ENCODE measurements at regions of chr7 and their contacts with region 1.

Region 1: DNA sequence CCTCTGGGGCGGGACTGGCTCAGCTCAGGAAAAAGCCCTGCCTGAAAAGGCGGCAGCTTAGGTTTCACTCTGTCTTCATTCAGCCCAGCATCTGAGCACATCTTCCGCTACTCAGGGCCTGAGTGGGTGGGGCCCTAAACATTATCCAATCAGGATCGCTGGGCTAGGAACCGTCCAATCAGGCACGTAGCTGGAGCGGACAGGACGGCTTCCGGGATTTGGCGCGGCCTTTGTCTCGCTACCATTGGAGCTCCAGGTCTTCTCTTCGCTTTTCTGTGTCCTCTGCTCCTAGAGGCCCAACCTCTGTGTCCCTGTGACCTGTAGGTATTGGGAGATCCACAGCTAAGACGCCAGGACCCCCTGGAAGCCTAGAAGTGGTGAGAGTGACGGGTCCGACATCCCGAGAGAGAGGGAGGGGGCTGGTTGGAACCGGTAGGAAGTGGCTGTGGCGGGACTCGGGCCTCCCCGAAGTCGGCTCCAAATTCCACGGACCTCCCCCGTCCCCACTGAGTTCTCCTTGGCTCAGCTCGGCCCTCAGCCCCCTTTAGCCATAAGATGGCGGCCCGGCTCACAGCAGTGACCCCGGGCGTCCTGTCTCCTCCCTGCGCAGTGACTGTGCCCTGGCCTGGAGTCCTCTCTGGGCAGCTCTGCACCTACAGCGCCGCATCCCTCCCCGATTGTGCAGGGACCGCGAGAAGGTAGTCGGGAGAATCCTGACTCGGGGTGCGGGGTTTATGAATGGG is 99.1 kb downstream of the ZNF680 start:
- DNase-seq: peak; percentile 4
- ATAC-seq: peak; percentile 42
- H3K4me3 ChIP-seq: peak overlapping the region; percentile 36
- H3K27ac ChIP-seq: no peak overlapping the region
- H3K4me1 ChIP-seq: no peaks in the 10 kb centered on the region
- H3K27me3 ChIP-seq: no peaks in the 10 kb centered on the region
- CTCF ChIP-seq: no peak
- POLR2A ChIP-seq: no peak
- RAD21 ChIP-seq: no peak

Region 2: DNA sequence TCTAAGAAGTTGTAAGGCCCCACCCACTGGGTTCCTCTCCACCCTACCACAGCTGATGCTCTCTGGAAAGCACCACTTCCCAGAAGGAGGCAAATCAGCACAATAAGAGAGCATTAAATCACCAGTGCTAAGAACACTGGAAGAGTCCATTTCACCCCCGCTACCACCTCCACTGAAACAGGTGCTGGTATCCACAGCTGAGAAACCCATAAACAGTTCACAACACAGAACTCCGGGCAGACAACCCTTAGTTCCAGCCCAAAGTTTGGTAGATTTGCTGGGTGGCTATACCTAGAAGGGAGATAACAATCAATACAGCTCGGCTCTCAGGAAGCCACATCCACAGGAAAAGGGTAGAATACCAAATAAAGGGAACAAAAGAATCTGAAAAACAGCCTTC is 65.0 kb after region 1 on chr7:
- CTCF ChIA-PET with region 1: no interaction called
- POLR2A ChIA-PET with region 1: no interaction called
- dilution Hi-C with region 1: no loop called
- in situ Hi-C with region 1: no loop called
- intact Hi-C with region 1: loop called (anchors 10 kb)
- DNase-seq: no peak
- ATAC-seq: no peak
- H3K4me3 ChIP-seq: no peak overlapping the region
- H3K27ac ChIP-seq: no peak overlapping the region
- H3K4me1 ChIP-seq: no peaks in the 10 kb centered on the region
- H3K27me3 ChIP-seq: no peaks in the 10 kb centered on the region
- CTCF ChIP-seq: no peak
- POLR2A ChIP-seq: no peak
- RAD21 ChIP-seq: no peak

Measured in IMR-90 (cell line).